Naive thymus-derived CD4-positive, alpha-beta T cell (primary cell): ENCODE measurements at regions of chr19 and their contacts with region 1.

Region 1: GRCh38 chr19:48588670-48589399 is 17.7 kb upstream of the SPACA4 start:
- DNase-seq: peak; percentile 65 to 92 (median 81)
- ATAC-seq: peak; percentile 92
- H3K4me3 ChIP-seq: no peak overlapping the region
- H3K4me3 Mint-ChIP-seq: peak overlapping the region; percentile 51 to 93 (median 78)
- H3K27ac ChIP-seq: no peak overlapping the region
- H3K27ac Mint-ChIP-seq: peak overlapping the region in 6 of 9 donors; percentile 37 to 86 (median 78)
- H3K4me1 ChIP-seq: peaks cover 0 to 3% of the 10 kb centered on the region in 2 donors
- H3K4me1 Mint-ChIP-seq: peaks cover 11 to 27% (median 15%) of the 10 kb centered on the region in 7 donors
- H3K27me3 ChIP-seq: no peaks in the 10 kb centered on the region
- H3K27me3 Mint-ChIP-seq: peaks cover 0 to 5% (median 0%) of the 10 kb centered on the region in 5 donors

Region 2: GRCh38 chr19:48271531-48272151 is 317.2 kb before region 1 on chr19:
- CTCF ChIA-PET with region 1: interaction called, 4 read pairs
- POLR2A ChIA-PET with region 1: no interaction called
- intact Hi-C with region 1: loop called in 1 of 2 experiments (anchors 1 kb)
- DNase-seq: peak in 4 of 9 donors; percentile 5 to 32 (median 9)
- ATAC-seq: peak; percentile 40
- H3K4me3 ChIP-seq: peak overlapping the region; percentile 55
- H3K4me3 Mint-ChIP-seq: peak overlapping the region; percentile 76 to 95 (median 88)
- H3K27ac ChIP-seq: no peak overlapping the region
- H3K27ac Mint-ChIP-seq: peak overlapping the region in 1 of 9 donors; percentile 33
- H3K4me1 ChIP-seq: peaks cover 0 to 5% of the 10 kb centered on the region in 2 donors
- H3K4me1 Mint-ChIP-seq: peaks cover 13 to 30% (median 20%) of the 10 kb centered on the region in 7 donors
- H3K27me3 ChIP-seq: no peaks in the 10 kb centered on the region
- H3K27me3 Mint-ChIP-seq: peaks cover 0 to 23% (median 11%) of the 10 kb centered on the region in 5 donors

Region 3: DNA sequence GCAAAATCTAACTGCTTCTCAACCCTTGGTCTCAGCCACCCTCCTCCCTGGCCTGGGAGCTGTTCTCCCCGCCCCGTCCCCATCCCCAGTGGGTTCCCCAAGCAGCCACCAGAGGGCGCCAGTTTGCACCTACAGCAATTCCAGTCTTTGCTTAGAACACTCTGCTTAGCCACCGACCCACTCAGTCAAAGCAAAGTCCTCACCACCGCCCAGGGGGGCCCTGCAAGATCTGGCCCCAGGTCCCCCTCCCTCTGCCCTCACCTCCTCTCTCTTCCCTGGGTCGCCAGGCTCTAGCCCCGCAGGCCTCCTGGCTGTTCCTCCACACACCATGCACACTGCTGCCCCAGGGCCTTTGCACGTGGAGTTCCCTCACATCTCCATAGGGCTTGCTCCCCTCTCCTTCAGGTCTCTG is 237.5 kb before region 1 on chr19:
- CTCF ChIA-PET with region 1: interaction called, 5 read pairs
- POLR2A ChIA-PET with region 1: no interaction called
- intact Hi-C with region 1: loop called (anchors 1 kb)
- DNase-seq: peak; percentile 49 to 81 (median 64)
- ATAC-seq: peak; percentile 82
- H3K4me3 ChIP-seq: no peak overlapping the region
- H3K4me3 Mint-ChIP-seq: peak overlapping the region in 1 of 10 donors; percentile 45
- H3K27ac ChIP-seq: no peak overlapping the region
- H3K27ac Mint-ChIP-seq: peak overlapping the region in 1 of 9 donors; percentile 5
- H3K4me1 ChIP-seq: no peaks in the 10 kb centered on the region
- H3K4me1 Mint-ChIP-seq: peaks cover 0 to 10% (median 3%) of the 10 kb centered on the region in 7 donors
- H3K27me3 ChIP-seq: no peaks in the 10 kb centered on the region
- H3K27me3 Mint-ChIP-seq: no peaks in the 10 kb centered on the region

Region 4: GRCh38 chr19:48501496-48502350 is 87.1 kb before region 1 on chr19:
- CTCF ChIA-PET with region 1: interaction called, 31 read pairs
- POLR2A ChIA-PET with region 1: interaction called, 4 read pairs
- intact Hi-C with region 1: loop called (anchors 1 kb)
- DNase-seq: peak in 8 of 9 donors; percentile 64 to 89 (median 79)
- ATAC-seq: peak; percentile 83
- H3K4me3 ChIP-seq: peak overlapping the region; percentile 37
- H3K4me3 Mint-ChIP-seq: peak overlapping the region; percentile 70 to 86 (median 80)
- H3K27ac ChIP-seq: peak overlapping the region; percentile 60
- H3K27ac Mint-ChIP-seq: peak overlapping the region; percentile 59 to 95 (median 84)
- H3K4me1 ChIP-seq: peaks cover 0 to 15% of the 10 kb centered on the region in 2 donors
- H3K4me1 Mint-ChIP-seq: peaks cover 0 to 29% (median 19%) of the 10 kb centered on the region in 7 donors
- H3K27me3 ChIP-seq: no peaks in the 10 kb centered on the region
- H3K27me3 Mint-ChIP-seq: peaks cover 0 to 9% (median 0%) of the 10 kb centered on the region in 5 donors

Region 5: GRCh38 chr19:48618916-48619691 is 30.3 kb after region 1 on chr19 and contains the starts of genes RPL18 and SPHK2:
- CTCF ChIA-PET with region 1: interaction called, 9 read pairs
- POLR2A ChIA-PET with region 1: interaction called, 3 read pairs
- intact Hi-C with region 1: loop called in 1 of 2 experiments (anchors 2 kb)
- DNase-seq: peak; percentile 89 to 97 (median 95)
- ATAC-seq: peak; percentile 89
- H3K4me3 ChIP-seq: peak within 1 kb of the TSS; percentile 96
- H3K4me3 Mint-ChIP-seq: peak within 1 kb of the TSS; percentile 88 to 99 (median 96)
- H3K27ac ChIP-seq: peak within 1 kb of the TSS; percentile 95
- H3K27ac Mint-ChIP-seq: peak within 1 kb of the TSS; percentile 96 to 99 (median 98)
- H3K4me1 ChIP-seq: peaks cover 26 to 45% of the 10 kb centered on the region in 2 donors
- H3K4me1 Mint-ChIP-seq: peaks cover 40 to 64% (median 54%) of the 10 kb centered on the region in 7 donors
- H3K27me3 ChIP-seq: no peaks in the 10 kb centered on the region
- H3K27me3 Mint-ChIP-seq: no peaks in the 10 kb centered on the region
- total RNA-seq, gene RPL18: 1,570 to 2,826 (median 2,745) TPM
- total RNA-seq, gene SPHK2: 20.1 to 34.7 (median 30.5) TPM